ENCODE measurements at regions of chr1 and their contacts with region 1.

Region 1: GRCh38 chr1:182725259-182726255 is 41.2 kb upstream of the RGS8 start:
- DNase-seq: no peak
- ATAC-seq: no peak

Region 2: GRCh38 chr1:182752077-182752988 is 26.8 kb after region 1 on chr1:
- intact Hi-C with region 1: loop called (anchors 1 kb)
- DNase-seq: no peak
- ATAC-seq: peak; percentile 82

Region 3: GRCh38 chr1:184082541-184083415 is 1357.2 kb after region 1 on chr1:
- intact Hi-C with region 1: no loop called
- DNase-seq: no peak
- ATAC-seq: no peak